CD14-positive monocyte (primary cell): ENCODE measurements at regions of chr16 and their contacts with region 1.

Region 1: GRCh38 chr16:19886073-19886941 is 1.7 kb upstream of the GPRC5B start:
- DNase-seq: peak; percentile 51 to 64 (median 57)
- H3K4me3 ChIP-seq: peak overlapping the region in 1 of 3 experiments; percentile 78
- H3K4me3 Mint-ChIP-seq: peak overlapping the region; percentile 64 to 94
- H3K27ac ChIP-seq: no peak overlapping the region
- H3K27ac Mint-ChIP-seq: no peak overlapping the region
- H3K4me1 ChIP-seq: peaks cover 22 to 31% of the 10 kb centered on the region in 2 donors
- H3K4me1 Mint-ChIP-seq: peaks cover 22% of the 10 kb centered on the region
- H3K27me3 ChIP-seq: peaks cover 34 to 47% of the 10 kb centered on the region in 2 donors
- H3K27me3 Mint-ChIP-seq: peaks cover 45 to 49% (median 49%) of the 10 kb centered on the region in 3 donors
- CTCF ChIP-seq: peak; percentile 99

Region 2: GRCh38 chr16:19601083-19601976 is 285.0 kb before region 1 on chr16:
- intact Hi-C with region 1: loop called in 1 of 2 experiments (anchors 1 kb)
- DNase-seq: no peak
- H3K4me3 ChIP-seq: no peak overlapping the region
- H3K4me3 Mint-ChIP-seq: no peak overlapping the region
- H3K27ac ChIP-seq: no peak overlapping the region
- H3K27ac Mint-ChIP-seq: no peak overlapping the region
- H3K4me1 ChIP-seq: no peaks in the 10 kb centered on the region
- H3K4me1 Mint-ChIP-seq: no peaks in the 10 kb centered on the region
- H3K27me3 ChIP-seq: no peaks in the 10 kb centered on the region
- H3K27me3 Mint-ChIP-seq: peaks cover 0 to 1% (median 0%) of the 10 kb centered on the region in 3 donors
- CTCF ChIP-seq: peak; percentile 35